Heart left ventricle (tissue), 16 donors: ENCODE measurements at regions of chrX and their contacts with region 1.

Region 1: DNA sequence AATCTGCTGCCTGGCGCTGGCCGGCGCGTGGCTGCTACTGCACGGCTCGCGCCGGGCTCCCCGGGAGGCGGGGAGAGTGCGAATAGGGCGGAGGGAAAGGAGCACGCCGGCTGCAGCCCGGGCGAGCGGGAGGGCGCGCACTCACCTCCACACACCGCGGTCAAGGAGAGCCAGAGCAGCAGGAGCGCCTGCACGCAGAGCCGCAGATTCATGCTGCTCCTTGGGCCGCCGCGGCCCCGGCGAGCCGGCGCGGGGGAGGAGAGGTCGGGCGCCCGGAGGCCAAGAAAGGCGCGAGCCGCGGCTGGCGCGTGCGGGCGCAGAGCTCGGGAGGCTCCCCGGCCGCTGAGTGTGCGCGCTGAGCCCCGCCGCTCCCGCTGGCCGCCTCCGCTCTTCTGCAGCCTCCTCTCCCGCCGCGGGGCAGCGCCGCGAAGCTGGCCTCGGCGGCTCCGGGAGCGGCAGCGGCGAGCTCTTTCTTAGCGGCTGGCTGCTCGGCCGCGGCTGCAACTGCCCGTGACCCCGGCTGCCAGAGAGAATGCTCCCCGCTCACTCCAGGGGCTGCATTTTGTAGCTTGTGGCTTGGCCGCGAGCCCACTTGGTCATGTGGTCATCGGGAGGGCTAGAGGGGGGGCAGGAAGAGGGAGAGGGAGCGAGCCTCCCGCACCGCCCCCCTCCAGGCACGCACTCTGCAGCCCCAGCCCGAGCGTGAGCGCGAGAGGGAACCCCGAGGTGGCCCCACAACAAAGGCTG is at the start of gene APLN:
- DNase-seq: peak; percentile 54 to 79 (median 63)
- ATAC-seq: peak in 3 of 4 donors; percentile 50 to 71 (median 52)
- H3K4me3 ChIP-seq: peak within 1 kb of the TSS; percentile 29 to 63 (median 55)
- H3K27ac ChIP-seq: peak within 1 kb of the TSS in 9 of 12 donors; percentile 17 to 68 (median 59)
- H3K4me1 ChIP-seq: peaks cover 0 to 25% (median 10%) of the 10 kb centered on the region in 12 donors
- H3K27me3 ChIP-seq: peaks cover 0 to 22% (median 0%) of the 10 kb centered on the region in 9 donors
- CTCF ChIP-seq: no peak
- POLR2A ChIP-seq: no peak
- total RNA-seq, gene APLN: 4.4 to 19.9 (median 12.7) TPM

Region 2: GRCh38 chrX:129642641-129643040 is 12.0 kb before region 1 on chrX:
- intact Hi-C with region 1: loop called in 1 of 10 experiments (anchors 2 kb)
- DNase-seq: no peak
- ATAC-seq: no peak
- H3K4me3 ChIP-seq: no peak overlapping the region
- H3K27ac ChIP-seq: no peak overlapping the region
- H3K4me1 ChIP-seq: peaks cover 0 to 9% (median 0%) of the 10 kb centered on the region in 12 donors
- H3K27me3 ChIP-seq: peaks cover 0 to 7% (median 0%) of the 10 kb centered on the region in 9 donors
- CTCF ChIP-seq: no peak
- POLR2A ChIP-seq: no peak

Region 3: GRCh38 chrX:129717892-129718291 is 63.3 kb after region 1 on chrX:
- intact Hi-C with region 1: loop called in 4 of 10 experiments (anchors 5 kb)
- DNase-seq: peak in 1 of 5 donors; percentile 45
- ATAC-seq: peak in 3 of 4 donors; percentile 33 to 54 (median 41)
- H3K4me3 ChIP-seq: no peak overlapping the region
- H3K27ac ChIP-seq: no peak overlapping the region
- H3K4me1 ChIP-seq: peaks cover 0 to 3% (median 0%) of the 10 kb centered on the region in 12 donors
- H3K27me3 ChIP-seq: peaks cover 0 to 9% (median 0%) of the 10 kb centered on the region in 9 donors
- CTCF ChIP-seq: no peak
- POLR2A ChIP-seq: no peak